CD8-positive, alpha-beta T cell (primary cell): ENCODE measurements at regions of chr17 and their contacts with region 1.

Region 1: GRCh38 chr17:58487589-58488427 is at the start of gene HSF5:
- DNase-seq: peak; percentile 52 to 89 (median 76)
- ATAC-seq: peak; percentile 94
- H3K4me3 ChIP-seq: peak within 1 kb of the TSS; percentile 29 to 37
- H3K4me3 Mint-ChIP-seq: peak within 1 kb of the TSS; percentile 69
- H3K27ac ChIP-seq: peak within 1 kb of the TSS; percentile 22 to 40
- H3K27ac Mint-ChIP-seq: peak within 1 kb of the TSS; percentile 70
- H3K4me1 ChIP-seq: peaks cover 14% of the 10 kb centered on the region
- H3K4me1 Mint-ChIP-seq: peaks cover 16% of the 10 kb centered on the region
- H3K27me3 ChIP-seq: no peaks in the 10 kb centered on the region
- H3K27me3 Mint-ChIP-seq: no peaks in the 10 kb centered on the region
- CTCF ChIP-seq: peak; percentile 68
- total RNA-seq, gene HSF5: 1.1 to 1.6 TPM

Region 2: GRCh38 chr17:58329035-58329809 is 158.6 kb before region 1 on chr17:
- CTCF ChIA-PET with region 1: interaction called, 3 read pairs
- POLR2A ChIA-PET with region 1: interaction called, 5 read pairs
- intact Hi-C with region 1: loop called in 1 of 2 experiments (anchors 5 kb)
- DNase-seq: peak in 8 of 9 experiments; percentile 56 to 90 (median 77)
- ATAC-seq: peak; percentile 36
- H3K4me3 ChIP-seq: peak overlapping the region; percentile 90 to 99
- H3K4me3 Mint-ChIP-seq: peak overlapping the region; percentile 92
- H3K27ac ChIP-seq: peak overlapping the region; percentile 48 to 99
- H3K27ac Mint-ChIP-seq: peak overlapping the region; percentile 96
- H3K4me1 ChIP-seq: peaks cover 47% of the 10 kb centered on the region
- H3K4me1 Mint-ChIP-seq: peaks cover 54% of the 10 kb centered on the region
- H3K27me3 ChIP-seq: no peaks in the 10 kb centered on the region
- H3K27me3 Mint-ChIP-seq: no peaks in the 10 kb centered on the region
- CTCF ChIP-seq: peak; percentile 84

Region 3: DNA sequence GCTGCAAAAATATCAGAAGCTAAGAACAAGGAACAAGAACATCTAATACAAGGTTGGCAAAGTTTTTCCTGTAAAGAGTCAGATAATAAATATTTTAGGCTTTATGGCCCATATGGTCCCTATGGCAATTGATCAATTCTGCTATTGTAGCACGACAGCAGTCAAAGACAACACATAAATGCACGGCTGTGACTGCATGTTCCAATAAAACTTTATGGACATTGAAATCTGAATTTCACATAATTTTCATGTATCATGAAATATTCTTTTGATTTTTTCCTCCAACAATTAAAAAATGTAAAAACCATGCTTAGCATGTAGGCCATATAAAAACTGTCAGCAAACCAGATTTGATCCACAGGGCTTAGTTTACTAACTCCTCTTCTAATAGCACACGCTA is 60.0 kb before region 1 on chr17:
- CTCF ChIA-PET with region 1: no interaction called
- POLR2A ChIA-PET with region 1: no interaction called
- intact Hi-C with region 1: no loop called
- DNase-seq: no peak
- ATAC-seq: no peak
- H3K4me3 ChIP-seq: no peak overlapping the region
- H3K4me3 Mint-ChIP-seq: no peak overlapping the region
- H3K27ac ChIP-seq: no peak overlapping the region
- H3K27ac Mint-ChIP-seq: no peak overlapping the region
- H3K4me1 ChIP-seq: no peaks in the 10 kb centered on the region
- H3K4me1 Mint-ChIP-seq: no peaks in the 10 kb centered on the region
- H3K27me3 ChIP-seq: no peaks in the 10 kb centered on the region
- H3K27me3 Mint-ChIP-seq: no peaks in the 10 kb centered on the region
- CTCF ChIP-seq: no peak

Region 4: DNA sequence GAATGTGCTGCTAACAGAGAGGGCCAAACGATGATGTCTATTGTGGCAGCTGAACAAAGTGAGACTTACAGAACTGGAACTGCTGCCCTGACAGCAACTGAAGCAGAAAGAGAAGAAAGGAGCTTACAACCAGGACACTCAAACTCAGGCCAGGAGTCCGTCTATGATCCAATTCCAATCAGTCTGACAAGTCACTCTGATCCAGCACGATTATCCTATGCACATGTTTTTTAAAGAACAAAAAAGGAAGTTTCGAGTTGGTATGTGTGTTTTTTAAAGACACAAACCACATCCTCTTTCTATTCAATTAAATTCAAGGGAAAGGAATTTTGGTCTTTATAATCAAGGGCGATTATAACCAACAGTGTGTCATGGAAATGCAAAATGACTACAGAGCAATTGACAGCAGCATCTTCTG is 69.0 kb after region 1 on chr17:
- CTCF ChIA-PET with region 1: no interaction called
- POLR2A ChIA-PET with region 1: no interaction called
- intact Hi-C with region 1: no loop called
- DNase-seq: no peak
- ATAC-seq: no peak
- H3K4me3 ChIP-seq: no peak overlapping the region
- H3K4me3 Mint-ChIP-seq: no peak overlapping the region
- H3K27ac ChIP-seq: no peak overlapping the region
- H3K27ac Mint-ChIP-seq: no peak overlapping the region
- H3K4me1 ChIP-seq: peaks cover 5% of the 10 kb centered on the region
- H3K4me1 Mint-ChIP-seq: peaks cover 7% of the 10 kb centered on the region
- H3K27me3 ChIP-seq: no peaks in the 10 kb centered on the region
- H3K27me3 Mint-ChIP-seq: no peaks in the 10 kb centered on the region
- CTCF ChIP-seq: no peak